HEK293 (cell line): ENCODE measurements at regions of chr12 and their contacts with region 1.

Region 1: DNA sequence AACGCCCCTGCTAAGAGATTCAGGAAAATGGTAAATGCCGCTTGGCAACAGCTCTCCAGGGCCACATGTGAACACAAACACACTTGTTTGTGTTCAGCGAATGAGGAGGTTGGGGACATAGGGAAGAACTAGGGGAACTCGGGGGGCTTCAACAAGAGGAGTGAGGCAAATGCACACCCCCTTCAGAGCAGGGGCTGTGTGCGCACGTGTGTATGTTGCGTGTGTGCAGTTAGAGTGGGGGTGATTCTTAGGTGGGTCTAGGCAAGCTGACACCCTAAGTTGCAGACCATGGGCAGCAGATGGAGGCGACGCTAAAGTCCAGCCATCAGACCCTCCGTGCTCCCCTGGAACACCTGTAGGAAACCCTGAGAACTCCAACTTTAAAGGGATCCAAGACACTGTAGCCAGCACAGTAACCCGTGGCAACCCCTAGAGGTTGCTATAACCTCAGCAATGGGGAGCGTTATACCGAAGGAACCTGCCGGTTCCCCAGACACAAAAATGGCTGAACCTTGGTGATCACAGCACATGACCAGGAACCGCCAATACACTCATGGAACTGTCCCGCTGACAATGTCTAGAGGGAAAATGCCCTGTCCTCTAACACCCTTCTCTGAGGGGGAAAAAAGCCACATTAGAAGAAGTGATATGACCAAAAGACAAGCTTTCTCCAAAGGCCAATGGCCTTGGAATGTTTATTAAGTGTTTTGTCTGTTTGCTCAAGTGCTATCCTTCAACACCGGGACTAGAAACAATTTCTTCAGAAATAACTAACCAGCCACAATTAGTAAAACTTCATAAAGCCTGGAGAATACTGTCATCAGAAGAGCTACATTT is 86.5 kb upstream of the CEP83 start:
- H3K4me3 ChIP-seq: no peak overlapping the region
- H3K27ac ChIP-seq: no peak overlapping the region
- H3K4me1 ChIP-seq: no peaks in the 10 kb centered on the region; the same call in 1 of the 2 replicates
- CTCF ChIP-seq: peak; percentile 87

Region 2: GRCh38 chr12:94561943-94562411 is 15.8 kb after region 1 on chr12:
- CTCF ChIA-PET with region 1: interaction called, 11 read pairs
- POLR2A ChIA-PET with region 1: interaction called, 3 read pairs
- H3K4me3 ChIP-seq: no peak overlapping the region
- H3K27ac ChIP-seq: no peak overlapping the region
- H3K4me1 ChIP-seq: peaks cover 5% of the 10 kb centered on the region; the same call in 1 of the 2 replicates
- CTCF ChIP-seq: no peak

Region 3: GRCh38 chr12:94656575-94656974 is 110.4 kb after region 1 on chr12:
- CTCF ChIA-PET with region 1: no interaction called
- POLR2A ChIA-PET with region 1: no interaction called
- H3K4me3 ChIP-seq: no peak overlapping the region
- H3K27ac ChIP-seq: no peak overlapping the region
- H3K4me1 ChIP-seq: no peaks in the 10 kb centered on the region
- CTCF ChIP-seq: no peak